Breast epithelium (tissue), 4 donors: ENCODE measurements at regions of chr3 and their contacts with region 1.

Region 1: GRCh38 chr3:126961791-126962461 is 21.0 kb upstream of the PLXNA1 start:
- DNase-seq: peak in 1 of 2 donors; percentile 50
- H3K4me3 ChIP-seq: no peak overlapping the region
- H3K27ac ChIP-seq: peak overlapping the region; percentile 50 to 78
- H3K4me1 ChIP-seq: peaks cover 8 to 10% of the 10 kb centered on the region in 2 donors
- H3K27me3 ChIP-seq: no peaks in the 10 kb centered on the region
- CTCF ChIP-seq: no peak
- POLR2A ChIP-seq: no peak

Region 2: GRCh38 chr3:126816986-126817777 is 144.7 kb before region 1 on chr3:
- intact Hi-C with region 1: no loop called
- DNase-seq: no peak
- H3K4me3 ChIP-seq: no peak overlapping the region
- H3K27ac ChIP-seq: no peak overlapping the region
- H3K4me1 ChIP-seq: no peaks in the 10 kb centered on the region
- H3K27me3 ChIP-seq: no peaks in the 10 kb centered on the region
- CTCF ChIP-seq: no peak
- POLR2A ChIP-seq: no peak

Region 3: DNA sequence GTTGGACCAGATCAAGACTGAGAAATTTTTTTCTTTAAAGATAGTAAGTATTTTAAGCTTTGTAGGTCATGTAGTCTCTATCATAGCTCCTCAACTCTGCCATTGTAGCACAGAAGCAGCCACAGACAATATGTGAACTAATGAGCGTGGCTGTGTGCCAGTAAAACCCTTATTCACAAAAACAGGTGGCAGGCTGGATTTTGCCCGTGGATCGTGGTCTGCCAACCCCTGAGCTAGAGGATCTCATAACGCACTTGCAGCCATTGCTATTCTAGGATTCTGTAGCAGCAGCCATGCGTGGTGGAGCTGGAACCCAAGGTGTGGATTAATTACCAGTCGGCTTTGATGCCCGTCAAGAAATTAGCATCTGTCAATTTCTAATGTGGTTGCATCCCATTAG is 47.7 kb before region 1 on chr3:
- intact Hi-C with region 1: loop called (anchors 2 kb)
- DNase-seq: no peak
- H3K4me3 ChIP-seq: no peak overlapping the region
- H3K27ac ChIP-seq: no peak overlapping the region
- H3K4me1 ChIP-seq: peaks cover 0 to 5% of the 10 kb centered on the region in 2 donors
- H3K27me3 ChIP-seq: no peaks in the 10 kb centered on the region
- CTCF ChIP-seq: no peak
- POLR2A ChIP-seq: no peak

Region 4: DNA sequence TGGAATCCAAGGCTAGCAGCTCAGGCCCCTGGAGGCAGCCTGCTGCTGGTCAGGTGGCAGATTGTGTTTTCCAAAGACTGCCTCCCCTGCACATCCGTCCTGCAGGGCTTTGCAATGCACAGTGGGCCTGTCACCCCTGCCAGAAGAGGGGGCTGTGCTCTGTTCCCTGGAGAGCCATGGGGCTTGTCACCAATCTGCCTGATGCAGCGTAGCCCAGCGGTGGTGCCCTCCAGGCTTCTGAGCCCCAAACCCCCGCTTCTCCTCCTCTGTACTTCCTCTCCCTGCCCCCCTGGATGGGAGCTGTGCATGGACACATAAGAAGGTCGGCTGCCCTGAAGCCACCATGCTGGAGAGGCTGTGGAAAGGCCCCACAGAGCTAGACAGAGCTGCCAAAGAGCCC is 10.9 kb after region 1 on chr3:
- intact Hi-C with region 1: no loop called
- DNase-seq: no peak
- H3K4me3 ChIP-seq: no peak overlapping the region
- H3K27ac ChIP-seq: peak overlapping the region; percentile 62 to 85
- H3K4me1 ChIP-seq: peaks cover 0 to 8% of the 10 kb centered on the region in 2 donors
- H3K27me3 ChIP-seq: no peaks in the 10 kb centered on the region
- CTCF ChIP-seq: no peak
- POLR2A ChIP-seq: no peak